Right ventricle myocardium superior (tissue), 1 donor: ENCODE measurements at regions of chr2 and their contacts with region 1.

Region 1: GRCh38 chr2:231680992-231681853 is 27.1 kb upstream of the PTMA start:
- DNase-seq: peak; percentile 93
- ATAC-seq: peak; percentile 92

Region 2: GRCh38 chr2:230968921-230969658 is 712.1 kb before region 1 on chr2:
- intact Hi-C with region 1: no loop called
- DNase-seq: no peak
- ATAC-seq: no peak

Region 3: DNA sequence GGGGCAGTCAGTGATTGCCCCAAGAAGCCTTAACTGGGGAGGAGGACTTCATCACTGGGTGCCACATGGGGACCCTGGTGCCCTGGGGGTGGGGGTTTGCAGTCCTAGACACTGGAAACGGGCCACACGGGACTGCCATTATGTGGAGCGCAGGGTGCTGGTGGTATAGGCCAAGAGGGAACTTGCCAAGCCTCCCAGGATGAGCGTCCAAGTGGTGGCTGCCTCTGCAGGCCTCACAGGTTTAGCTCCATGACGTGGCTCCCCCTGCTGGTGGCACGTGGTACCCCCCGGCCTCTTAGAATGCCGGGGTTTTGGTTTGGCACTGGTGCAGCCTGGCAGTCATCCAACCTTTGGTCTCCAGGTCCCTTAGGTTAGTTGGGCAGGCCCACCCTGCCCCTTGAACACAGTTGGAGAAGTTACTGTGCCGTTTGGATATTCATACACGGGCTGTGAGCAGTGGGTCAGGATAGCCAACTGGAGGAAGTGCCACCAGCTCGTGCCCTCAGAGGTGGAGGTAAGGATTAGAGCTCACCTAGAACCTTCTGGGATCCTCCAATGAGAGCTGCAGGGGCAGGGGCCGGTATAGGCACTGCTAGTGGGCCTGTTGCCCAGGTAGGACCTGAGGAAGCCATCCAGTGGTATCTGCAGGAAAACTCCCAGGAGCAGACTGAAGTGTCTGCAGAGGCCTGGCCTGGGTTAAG is 32.7 kb after region 1 on chr2:
- intact Hi-C with region 1: loop called (anchors 2 kb)
- DNase-seq: peak; percentile 95
- ATAC-seq: peak; percentile 52

Region 4: DNA sequence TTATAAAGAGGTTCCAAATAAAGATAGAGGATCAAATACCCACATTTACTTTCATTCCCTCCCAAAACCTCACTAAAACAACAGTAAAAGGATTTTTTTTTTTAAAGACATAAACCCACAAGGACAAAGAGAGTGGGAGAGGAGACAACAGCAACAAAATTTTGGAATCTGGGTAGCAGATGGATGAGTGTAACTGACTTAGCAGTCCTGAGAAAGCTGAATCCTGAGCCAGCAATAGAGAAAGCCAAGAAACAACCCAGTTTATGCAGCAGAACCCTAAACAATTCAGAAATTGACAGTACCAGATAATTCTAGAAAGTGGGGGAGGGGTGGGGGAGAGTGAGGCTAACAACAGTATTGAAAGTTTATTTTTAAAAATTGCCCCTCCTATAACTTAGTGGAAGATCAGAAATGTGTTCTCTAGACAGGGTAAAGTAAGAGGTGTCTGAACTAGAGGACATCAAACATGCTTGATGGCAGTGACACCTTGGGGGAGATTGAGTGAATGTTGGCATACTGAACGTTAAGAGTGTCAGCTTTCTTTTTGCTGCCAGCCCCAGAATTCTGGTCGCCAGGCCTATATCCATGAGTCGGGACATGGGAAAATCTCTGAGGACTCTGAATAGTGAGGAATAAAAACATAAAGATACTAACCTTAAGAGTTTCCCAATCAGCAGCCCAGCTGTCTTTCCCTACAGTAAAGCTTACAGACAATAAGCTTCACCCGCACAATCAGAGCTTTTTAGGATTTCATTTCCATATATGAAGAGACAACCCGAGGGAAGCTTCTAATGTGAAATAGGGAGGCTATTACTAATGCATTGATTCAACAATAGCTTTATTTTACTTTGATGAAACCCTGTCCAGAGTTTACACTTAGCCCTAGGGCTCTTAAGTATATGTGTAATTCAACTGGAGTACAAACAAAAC is 569.3 kb after region 1 on chr2:
- intact Hi-C with region 1: no loop called
- DNase-seq: no peak
- ATAC-seq: no peak